Activated naive CD8-positive, alpha-beta T cell treated with anti-CD3 and anti-CD28 coated beads, Interleukin-2, amount 10 ng/mL, durations not matched to agents 7 days and 5 days (primary cell): ENCODE measurements at regions of chr19 and their contacts with region 1.

Region 1: GRCh38 chr19:1189419-1189818 is 15.4 kb upstream of the SBNO2 start:
- DNase-seq: no peak
- ATAC-seq: peak; percentile 82
- H3K4me3 Mint-ChIP-seq: no peak overlapping the region
- H3K27ac Mint-ChIP-seq: peak overlapping the region; percentile 71
- H3K4me1 Mint-ChIP-seq: peaks cover 16% of the 10 kb centered on the region
- H3K27me3 Mint-ChIP-seq: no peaks in the 10 kb centered on the region

Region 2: GRCh38 chr19:1205114-1206062 is 16.0 kb after region 1 on chr19 and contains the start of gene STK11:
- POLR2A ChIA-PET with region 1: interaction called, 14 read pairs
- DNase-seq: peak; percentile 100
- ATAC-seq: peak; percentile 96
- H3K4me3 Mint-ChIP-seq: peak within 1 kb of the TSS; percentile 97
- H3K27ac Mint-ChIP-seq: peak within 1 kb of the TSS; percentile 91
- H3K4me1 Mint-ChIP-seq: peaks cover 21% of the 10 kb centered on the region
- H3K27me3 Mint-ChIP-seq: no peaks in the 10 kb centered on the region
- total RNA-seq, gene STK11: 87.1 to 87.2 TPM